ENCODE measurements at regions of chr7 and their contacts with region 1.

Region 1: GRCh38 chr7:16695621-16696237 is 49.7 kb downstream of the BZW2 start:
- DNase-seq: peak; percentile 39
- H3K4me3 ChIP-seq: no peak overlapping the region
- H3K27ac ChIP-seq: no peak overlapping the region
- H3K4me1 ChIP-seq: peaks cover 0 to 20% of the 10 kb centered on the region in 2 experiments; a peak in 1 of 4 replicates
- H3K27me3 ChIP-seq: no peaks in the 10 kb centered on the region
- CTCF ChIP-seq: peak; percentile 77
- EP300 ChIP-seq: no peak
- RAD21 ChIP-seq: peak; percentile 76

Region 2: DNA sequence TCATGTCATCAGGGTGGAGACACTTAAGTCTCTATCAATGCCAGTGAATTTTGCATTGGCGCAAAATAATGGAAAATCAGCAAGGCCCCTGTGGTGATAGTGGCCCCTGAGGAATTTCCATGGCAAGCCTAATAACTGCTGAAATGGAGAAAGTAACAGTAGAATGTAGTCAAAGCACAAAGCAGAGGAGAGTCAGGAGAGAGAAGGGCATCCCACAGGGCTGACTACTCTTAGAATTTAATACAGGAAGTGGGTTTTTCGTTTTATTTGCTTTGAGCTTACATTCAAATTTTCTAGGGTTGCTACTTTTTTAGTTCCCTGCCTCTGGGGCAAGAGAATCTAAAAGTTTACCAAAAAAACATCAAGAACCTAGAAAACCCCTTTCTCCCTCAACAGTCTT is 10.8 kb before region 1 on chr7:
- CTCF ChIA-PET with region 1: interaction called, 12 read pairs
- POLR2A ChIA-PET with region 1: no interaction called
- DNase-seq: no peak
- H3K4me3 ChIP-seq: no peak overlapping the region
- H3K27ac ChIP-seq: no peak overlapping the region
- H3K4me1 ChIP-seq: no peaks in the 10 kb centered on the region; a peak in 1 of 4 replicates
- H3K27me3 ChIP-seq: no peaks in the 10 kb centered on the region
- CTCF ChIP-seq: no peak
- EP300 ChIP-seq: no peak
- RAD21 ChIP-seq: no peak

Region 3: DNA sequence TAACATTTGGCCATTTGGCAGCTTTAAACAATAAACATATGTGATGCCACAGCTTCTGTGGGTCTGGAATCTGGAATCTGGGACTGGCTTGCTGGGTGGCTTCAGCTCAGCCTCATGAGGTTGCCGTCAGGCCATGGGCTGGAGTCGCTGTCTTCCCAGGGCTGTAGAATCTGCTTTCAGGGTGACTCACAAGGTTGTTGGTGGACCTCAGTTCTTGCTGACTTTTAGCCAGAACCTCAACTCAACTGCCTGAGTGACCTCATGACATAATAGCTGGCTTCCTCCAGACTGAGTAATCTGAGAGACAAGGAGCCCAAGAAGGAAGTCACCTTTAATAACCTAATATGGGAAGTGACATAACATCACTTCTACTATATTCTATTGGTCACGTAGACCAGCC is 13.3 kb after region 1 on chr7:
- CTCF ChIA-PET with region 1: interaction called, 17 read pairs
- POLR2A ChIA-PET with region 1: no interaction called
- DNase-seq: no peak
- H3K4me3 ChIP-seq: no peak overlapping the region
- H3K27ac ChIP-seq: peak overlapping the region in 1 of 2 experiments; percentile 75; a peak in 2 of 4 replicates
- H3K4me1 ChIP-seq: peaks cover 0 to 25% of the 10 kb centered on the region in 2 experiments; a peak in 2 of 4 replicates
- H3K27me3 ChIP-seq: no peaks in the 10 kb centered on the region
- CTCF ChIP-seq: no peak
- EP300 ChIP-seq: peak in 1 of 2 experiments; percentile 52; a peak in 1 of 4 replicates
- RAD21 ChIP-seq: no peak